ENCODE measurements at regions of chr2 and their contacts with region 1.

Region 1: GRCh38 chr2:65432227-65433190 is at the start of gene SPRED2:
- DNase-seq: peak; percentile 95
- H3K4me3 ChIP-seq: peak within 1 kb of the TSS; percentile 80
- H3K4me3 Mint-ChIP-seq: peak within 1 kb of the TSS; percentile 78
- H3K27ac Mint-ChIP-seq: peak within 1 kb of the TSS; percentile 84
- H3K4me1 ChIP-seq: peaks cover 10% of the 10 kb centered on the region
- H3K4me1 Mint-ChIP-seq: peaks cover 7% of the 10 kb centered on the region
- H3K27me3 ChIP-seq: no peaks in the 10 kb centered on the region
- H3K27me3 Mint-ChIP-seq: no peaks in the 10 kb centered on the region
- CTCF ChIP-seq: peak in 1 of 2 experiments; percentile 16
- total RNA-seq, gene SPRED2: 49.9 and 55.3 TPM in 2 replicates

Region 2: GRCh38 chr2:65264821-65265670 is 167.5 kb before region 1 on chr2:
- CTCF ChIA-PET with region 1: interaction called, 8 read pairs
- POLR2A ChIA-PET with region 1: interaction called, 3 read pairs
- intact Hi-C with region 1: loop called (anchors 1 kb)
- DNase-seq: peak; percentile 47 to 68
- H3K4me3 ChIP-seq: no peak overlapping the region
- H3K4me3 Mint-ChIP-seq: no peak overlapping the region
- H3K27ac Mint-ChIP-seq: no peak overlapping the region
- H3K4me1 ChIP-seq: no peaks in the 10 kb centered on the region
- H3K4me1 Mint-ChIP-seq: peaks cover 10% of the 10 kb centered on the region
- H3K27me3 ChIP-seq: no peaks in the 10 kb centered on the region
- H3K27me3 Mint-ChIP-seq: no peaks in the 10 kb centered on the region
- CTCF ChIP-seq: peak; percentile 64 to 83

Region 3: DNA sequence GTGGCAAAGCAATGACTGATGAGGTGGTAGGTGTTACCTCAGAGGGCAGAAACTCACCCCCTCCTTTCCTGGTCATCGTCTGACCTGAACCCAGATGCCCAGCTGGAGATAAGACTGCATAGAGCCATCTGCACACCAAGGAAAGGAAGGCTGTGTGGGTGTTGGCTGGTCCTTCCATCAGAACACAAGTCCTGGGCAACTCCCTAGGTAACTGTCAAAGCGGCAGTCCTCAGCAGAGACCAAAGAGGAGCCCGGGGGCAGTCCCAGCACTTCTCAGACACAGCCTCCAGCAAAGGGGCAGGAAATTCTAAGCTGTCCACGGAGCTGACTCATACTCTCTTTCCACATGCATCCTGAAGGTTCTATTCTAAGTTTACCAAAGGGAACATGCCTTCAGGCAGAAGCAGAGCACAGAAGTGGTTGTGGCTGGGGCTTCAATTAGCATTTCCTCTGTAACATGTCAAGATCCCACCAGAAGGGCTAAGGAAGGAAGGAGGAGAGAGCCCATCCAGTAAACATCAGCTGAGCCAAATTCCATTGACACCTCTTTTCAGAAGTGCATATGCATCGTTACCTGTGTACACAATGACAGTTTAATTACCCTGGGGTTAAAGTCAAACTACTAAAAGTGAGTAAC is 54.8 kb before region 1 on chr2:
- CTCF ChIA-PET with region 1: no interaction called
- POLR2A ChIA-PET with region 1: no interaction called
- intact Hi-C with region 1: loop called (anchors 1 kb)
- DNase-seq: peak; percentile 43 to 59
- H3K4me3 ChIP-seq: no peak overlapping the region
- H3K4me3 Mint-ChIP-seq: no peak overlapping the region
- H3K27ac Mint-ChIP-seq: peak overlapping the region; percentile 25
- H3K4me1 ChIP-seq: peaks cover 60% of the 10 kb centered on the region
- H3K4me1 Mint-ChIP-seq: peaks cover 62% of the 10 kb centered on the region
- H3K27me3 ChIP-seq: no peaks in the 10 kb centered on the region
- H3K27me3 Mint-ChIP-seq: no peaks in the 10 kb centered on the region
- CTCF ChIP-seq: no peak

Region 4: GRCh38 chr2:65453916-65454315 is 21.4 kb after region 1 on chr2:
- CTCF ChIA-PET with region 1: no interaction called
- POLR2A ChIA-PET with region 1: interaction called, 4 read pairs
- intact Hi-C with region 1: loop called (anchors 1 kb)
- DNase-seq: peak; percentile 57 to 62
- H3K4me3 ChIP-seq: no peak overlapping the region
- H3K4me3 Mint-ChIP-seq: no peak overlapping the region
- H3K27ac Mint-ChIP-seq: no peak overlapping the region
- H3K4me1 ChIP-seq: peaks cover 42% of the 10 kb centered on the region
- H3K4me1 Mint-ChIP-seq: peaks cover 21% of the 10 kb centered on the region
- H3K27me3 ChIP-seq: no peaks in the 10 kb centered on the region
- H3K27me3 Mint-ChIP-seq: no peaks in the 10 kb centered on the region
- CTCF ChIP-seq: no peak

Region 5: DNA sequence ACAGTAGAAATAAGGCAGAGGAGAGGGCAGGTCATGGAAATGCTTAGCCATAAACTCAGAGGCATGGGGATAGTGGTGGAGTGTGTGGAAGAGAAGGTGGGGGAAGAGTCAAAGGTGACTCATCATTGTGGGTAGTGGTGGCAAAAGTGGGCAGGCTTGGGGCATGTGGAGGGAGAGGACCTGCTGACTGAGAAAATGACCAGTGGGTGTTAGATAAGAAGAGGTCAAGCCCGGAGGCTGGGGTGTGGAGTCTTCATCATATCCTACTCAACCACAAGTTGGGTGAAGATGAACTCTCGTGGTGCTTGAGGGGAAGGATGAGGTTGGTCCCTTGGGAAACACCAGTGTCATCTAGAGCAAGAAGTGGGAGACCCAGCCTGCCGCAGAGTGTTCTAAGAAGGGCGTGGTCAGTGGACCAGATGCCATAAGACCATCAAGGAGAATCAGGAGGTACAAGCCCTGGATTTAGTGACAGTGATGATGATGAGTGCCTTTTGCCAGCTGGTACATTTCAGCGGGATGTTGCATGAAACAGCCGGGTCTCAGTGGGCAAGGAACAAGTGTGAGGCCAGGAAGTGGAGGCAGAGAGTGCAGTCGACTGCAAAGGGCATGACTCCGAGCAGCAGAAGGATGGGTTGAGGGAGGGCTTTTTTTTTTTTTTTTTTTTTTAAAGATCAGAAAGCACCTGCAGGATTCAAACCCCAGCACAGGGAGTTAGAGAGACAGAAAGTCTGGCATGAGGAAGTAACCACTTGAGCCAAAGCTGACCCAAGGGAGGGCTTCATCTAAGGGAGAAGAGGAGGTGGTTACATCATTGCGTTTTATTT is 122.5 kb after region 1 on chr2:
- CTCF ChIA-PET with region 1: no interaction called
- POLR2A ChIA-PET with region 1: no interaction called
- intact Hi-C with region 1: loop called (anchors 1 kb)
- DNase-seq: no peak
- H3K4me3 ChIP-seq: no peak overlapping the region
- H3K4me3 Mint-ChIP-seq: no peak overlapping the region
- H3K27ac Mint-ChIP-seq: no peak overlapping the region
- H3K4me1 ChIP-seq: peaks cover 5% of the 10 kb centered on the region; the same call in 1 of the 2 replicates
- H3K4me1 Mint-ChIP-seq: no peaks in the 10 kb centered on the region
- H3K27me3 ChIP-seq: no peaks in the 10 kb centered on the region
- H3K27me3 Mint-ChIP-seq: peaks cover 8% of the 10 kb centered on the region
- CTCF ChIP-seq: no peak